ENCODE measurements at regions of chr18 and their contacts with region 1.

Region 1: DNA sequence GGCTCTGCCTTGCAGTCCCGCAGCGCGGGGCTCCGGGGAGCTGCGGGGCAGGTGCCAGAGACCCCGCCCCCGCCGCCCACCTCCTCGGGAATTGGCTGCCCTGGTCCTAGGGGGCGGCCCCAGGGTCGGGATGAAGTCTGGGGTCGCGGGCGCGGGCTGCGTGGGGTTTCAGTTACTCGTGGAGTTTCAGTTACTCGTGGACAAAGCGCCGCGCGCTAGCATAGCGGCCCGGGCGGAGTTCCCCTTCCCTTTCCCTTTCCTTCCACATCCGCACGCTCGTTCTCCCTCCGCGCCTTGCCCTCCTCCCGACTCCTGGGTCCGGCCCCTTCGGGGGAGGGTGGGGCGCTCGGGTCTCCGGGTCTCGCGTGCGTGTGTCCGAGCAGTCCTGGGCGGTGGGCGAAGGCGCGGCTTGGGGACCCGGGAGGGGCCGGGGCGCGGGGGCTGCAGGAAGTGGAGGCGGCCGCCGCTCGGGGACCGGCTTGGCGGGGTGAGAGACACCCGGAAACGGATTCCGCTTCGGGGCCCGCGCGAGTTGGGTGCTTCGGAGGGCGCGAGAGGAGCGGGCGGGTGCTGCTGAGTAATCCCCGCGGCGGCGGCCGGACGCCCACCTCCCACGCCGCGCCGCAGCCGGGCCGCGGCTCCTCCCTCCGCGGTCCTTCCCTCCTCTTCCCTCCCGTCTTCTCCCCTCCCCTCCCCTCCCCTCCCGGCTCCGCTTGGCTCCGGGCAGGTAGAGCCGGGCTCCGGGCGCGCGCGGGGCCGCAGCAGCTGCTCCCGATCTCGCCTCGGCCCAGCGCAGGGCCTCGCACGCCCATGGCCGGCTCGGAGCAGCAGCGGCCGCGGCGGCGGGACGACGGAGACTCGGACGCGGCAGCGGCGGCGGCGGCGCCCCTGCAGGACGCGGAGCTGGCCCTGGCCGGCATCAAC is at the start of gene TTC39C:
- DNase-seq: peak; percentile 79
- H3K4me3 Mint-ChIP-seq: peak within 1 kb of the TSS; percentile 92
- H3K27ac Mint-ChIP-seq: peak within 1 kb of the TSS; percentile 86
- H3K4me1 Mint-ChIP-seq: peaks cover 77% of the 10 kb centered on the region
- H3K27me3 Mint-ChIP-seq: no peaks in the 10 kb centered on the region
- total RNA-seq, gene TTC39C: 28.8 and 31.8 TPM in 2 replicates

Region 2: GRCh38 chr18:23452728-23453679 is 561.3 kb before region 1 on chr18 and contains the start of gene RIOK3:
- intact Hi-C with region 1: loop called (anchors 5 kb)
- DNase-seq: peak; percentile 94
- H3K4me3 Mint-ChIP-seq: peak within 1 kb of the TSS; percentile 97
- H3K27ac Mint-ChIP-seq: peak within 1 kb of the TSS; percentile 92
- H3K4me1 Mint-ChIP-seq: peaks cover 39% of the 10 kb centered on the region
- H3K27me3 Mint-ChIP-seq: no peaks in the 10 kb centered on the region
- total RNA-seq, gene RIOK3: 40.8 and 52.2 TPM in 2 replicates

Region 3: GRCh38 chr18:23828426-23828825 is 185.9 kb before region 1 on chr18:
- intact Hi-C with region 1: loop called (anchors 2 kb)
- DNase-seq: peak; percentile 49
- H3K4me3 Mint-ChIP-seq: no peak overlapping the region
- H3K27ac Mint-ChIP-seq: peak overlapping the region; percentile 89
- H3K4me1 Mint-ChIP-seq: peaks cover 52% of the 10 kb centered on the region
- H3K27me3 Mint-ChIP-seq: peaks cover 4% of the 10 kb centered on the region

Region 4: DNA sequence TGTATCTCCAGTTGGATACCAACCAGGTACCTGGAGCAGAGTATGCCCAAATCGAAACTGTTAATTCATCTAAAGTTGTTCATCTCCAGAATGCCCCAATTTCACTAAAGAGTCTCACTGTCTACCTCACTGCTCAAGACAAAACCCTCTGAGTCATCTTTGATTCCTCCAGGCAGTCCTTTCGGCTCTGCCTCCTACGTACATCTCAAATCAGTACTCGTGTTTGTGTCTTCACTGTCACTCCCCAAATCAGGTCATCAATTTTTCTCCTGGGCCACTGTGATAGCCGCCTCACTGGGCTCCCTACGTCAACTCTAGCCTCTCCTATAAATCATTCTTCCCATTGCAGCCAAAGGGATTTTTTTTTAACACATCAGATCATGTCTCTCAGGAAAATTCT is 41.9 kb before region 1 on chr18:
- intact Hi-C with region 1: loop called (anchors 1 kb)
- DNase-seq: no peak
- H3K4me3 Mint-ChIP-seq: no peak overlapping the region
- H3K27ac Mint-ChIP-seq: no peak overlapping the region
- H3K4me1 Mint-ChIP-seq: peaks cover 47% of the 10 kb centered on the region
- H3K27me3 Mint-ChIP-seq: peaks cover 14% of the 10 kb centered on the region

Region 5: GRCh38 chr18:24118750-24119577 is 104.6 kb after region 1 on chr18:
- intact Hi-C with region 1: loop called (anchors 1 kb)
- DNase-seq: peak; percentile 61
- H3K4me3 Mint-ChIP-seq: no peak overlapping the region
- H3K27ac Mint-ChIP-seq: peak overlapping the region; percentile 44
- H3K4me1 Mint-ChIP-seq: peaks cover 31% of the 10 kb centered on the region
- H3K27me3 Mint-ChIP-seq: no peaks in the 10 kb centered on the region